Left ventricle myocardium superior (tissue), 1 donor: ENCODE measurements at regions of chr18 and their contacts with region 1.

Region 1: DNA sequence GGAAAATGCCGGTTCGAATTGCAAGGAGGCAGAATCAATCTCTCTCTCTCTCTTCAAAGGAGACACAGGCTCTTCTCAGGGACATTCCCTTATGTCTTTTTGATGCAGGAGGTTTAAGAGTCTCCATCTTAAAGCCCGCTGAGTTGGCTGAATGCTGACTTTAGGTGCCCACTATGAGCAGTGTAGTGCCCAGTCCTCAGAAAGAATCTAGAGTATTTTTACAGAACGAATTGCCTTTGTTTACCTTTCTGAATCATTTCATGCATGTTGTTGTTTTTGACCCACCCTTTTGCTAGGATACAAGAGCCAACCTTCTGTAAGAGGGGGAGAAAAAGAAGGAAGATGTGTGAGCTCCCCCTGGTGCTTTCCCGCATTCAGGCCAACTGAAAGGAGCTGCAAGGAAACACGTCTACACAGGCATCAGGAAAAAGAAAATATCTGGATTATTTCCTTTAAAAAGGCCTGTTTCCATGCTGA is 193.5 kb upstream of the TCF4 start:
- DNase-seq: peak; percentile 44
- ATAC-seq: peak; percentile 52

Region 2: GRCh38 chr18:55234366-55235093 is 547.0 kb before region 1 on chr18:
- intact Hi-C with region 1: loop called (anchors 10 kb)
- DNase-seq: peak; percentile 74
- ATAC-seq: peak; percentile 89

Region 3: GRCh38 chr18:55343396-55344073 is 438.0 kb before region 1 on chr18:
- intact Hi-C with region 1: loop called (anchors 10 kb)
- DNase-seq: no peak
- ATAC-seq: peak; percentile 54

Region 4: GRCh38 chr18:55415258-55415871 is 366.2 kb before region 1 on chr18:
- intact Hi-C with region 1: loop called (anchors 5 kb)
- DNase-seq: peak; percentile 95
- ATAC-seq: peak; percentile 90

Region 5: GRCh38 chr18:55435592-55435991 is 345.9 kb before region 1 on chr18:
- intact Hi-C with region 1: no loop called
- DNase-seq: no peak
- ATAC-seq: peak; percentile 48

Region 6: DNA sequence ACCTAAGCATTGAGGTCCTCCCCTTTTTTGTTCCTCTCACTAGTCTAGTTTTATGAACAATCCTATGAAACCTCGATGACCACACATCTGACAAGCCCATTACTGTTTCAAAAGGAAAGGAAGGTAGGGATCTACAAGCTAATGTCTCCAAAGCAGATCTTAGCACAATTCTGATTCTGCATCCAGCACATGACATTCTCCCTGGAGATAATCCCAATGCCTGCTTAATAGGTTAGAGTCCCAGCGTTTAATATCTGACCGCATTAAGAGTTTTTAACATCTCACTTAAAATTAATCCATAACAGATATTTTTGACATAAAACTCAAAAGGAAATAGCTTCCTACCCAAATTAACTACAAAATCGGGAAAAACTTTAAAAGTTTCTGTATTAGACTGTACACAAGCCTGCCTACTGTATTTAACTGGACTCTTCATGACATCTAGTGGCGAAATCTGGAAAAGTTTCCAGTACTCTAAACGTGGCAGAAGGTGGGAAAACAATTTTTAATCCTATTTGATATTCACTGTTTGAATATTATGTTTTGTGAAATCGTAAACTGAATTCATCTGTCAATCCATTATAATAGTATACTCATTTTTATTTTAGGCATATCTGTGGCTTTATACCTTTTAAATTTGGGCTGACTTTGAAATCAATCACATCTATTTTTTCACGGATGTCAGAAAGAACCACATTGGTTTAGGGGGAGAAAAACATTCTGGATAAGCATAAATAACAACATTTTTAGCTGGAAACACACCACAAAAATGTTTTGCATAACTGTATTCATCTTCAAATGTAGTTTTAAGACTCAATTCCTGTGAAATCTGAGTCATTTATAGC is 794.5 kb after region 1 on chr18:
- intact Hi-C with region 1: loop called (anchors 10 kb)
- DNase-seq: no peak
- ATAC-seq: peak; percentile 88